Heart right ventricle (tissue), 16 donors: ENCODE measurements at regions of chr4 and their contacts with region 1.

Region 1: DNA sequence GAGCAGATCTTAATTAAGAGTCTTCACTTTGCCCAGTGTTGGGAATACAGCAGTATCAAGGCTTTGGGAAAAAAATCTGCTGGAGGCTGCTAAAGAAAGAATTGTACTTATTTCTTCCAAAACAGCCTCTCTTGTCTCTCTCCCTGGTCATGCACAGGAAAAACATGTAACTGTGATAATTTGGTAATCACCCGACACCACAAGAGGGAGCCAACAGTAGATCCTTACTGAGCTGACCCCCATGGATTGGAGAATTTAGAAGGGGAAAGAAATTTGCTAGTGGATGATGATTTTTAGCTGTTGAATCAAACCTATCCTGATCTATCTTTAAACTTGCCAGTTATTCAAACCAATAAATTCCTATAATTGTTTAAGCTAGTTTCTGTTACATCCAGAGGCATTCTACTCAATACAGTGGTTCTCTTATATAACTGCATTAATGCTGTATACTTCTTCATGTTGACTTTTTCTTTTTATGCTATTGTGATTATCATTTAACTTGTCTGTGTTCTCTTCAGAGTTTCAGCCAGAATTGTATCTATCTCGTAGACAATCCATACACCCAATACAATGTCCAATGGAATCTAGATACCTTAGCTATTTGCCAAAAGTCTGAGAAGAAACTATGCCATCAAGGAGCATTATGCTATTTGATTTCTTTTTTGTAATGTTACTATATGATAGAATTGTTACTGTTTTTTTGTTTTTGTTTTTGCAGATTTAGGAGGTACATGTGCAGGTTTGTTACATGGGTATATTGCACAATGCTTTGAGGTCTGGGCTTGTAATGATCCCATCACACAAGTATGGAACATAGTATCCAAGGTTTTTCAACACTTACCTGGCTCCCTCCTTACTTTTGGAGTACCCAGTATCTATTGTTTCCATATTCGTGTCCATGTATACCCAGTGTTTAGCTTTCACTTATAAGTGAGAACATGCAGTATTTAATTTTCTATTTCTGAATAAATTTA is 31.3 kb upstream of the ARHGEF38 start:
- DNase-seq: peak in 1 of 2 donors; percentile 27
- ATAC-seq: peak in 1 of 8 donors; percentile 60
- H3K4me3 ChIP-seq: no peak overlapping the region
- H3K27ac ChIP-seq: no peak overlapping the region
- H3K4me1 ChIP-seq: no peaks in the 10 kb centered on the region
- H3K27me3 ChIP-seq: no peaks in the 10 kb centered on the region
- CTCF ChIP-seq: peak; percentile 25 to 70 (median 65)

Region 2: GRCh38 chr4:105541420-105541819 is 20.3 kb after region 1 on chr4:
- intact Hi-C with region 1: no loop called
- DNase-seq: no peak
- ATAC-seq: no peak
- H3K4me3 ChIP-seq: no peak overlapping the region
- H3K27ac ChIP-seq: no peak overlapping the region
- H3K4me1 ChIP-seq: peaks cover 0 to 8% (median 0%) of the 10 kb centered on the region in 9 donors
- H3K27me3 ChIP-seq: no peaks in the 10 kb centered on the region
- CTCF ChIP-seq: no peak

Region 3: GRCh38 chr4:105637408-105638176 is 116.5 kb after region 1 on chr4:
- intact Hi-C with region 1: loop called in 1 of 10 experiments (anchors 10 kb)
- DNase-seq: peak; percentile 43 to 63
- ATAC-seq: peak in 6 of 8 donors; percentile 52 to 94 (median 82)
- H3K4me3 ChIP-seq: no peak overlapping the region
- H3K27ac ChIP-seq: peak overlapping the region in 7 of 10 donors; percentile 9 to 35 (median 17)
- H3K4me1 ChIP-seq: peaks cover 0 to 64% (median 26%) of the 10 kb centered on the region in 9 donors
- H3K27me3 ChIP-seq: no peaks in the 10 kb centered on the region
- CTCF ChIP-seq: no peak

Region 4: DNA sequence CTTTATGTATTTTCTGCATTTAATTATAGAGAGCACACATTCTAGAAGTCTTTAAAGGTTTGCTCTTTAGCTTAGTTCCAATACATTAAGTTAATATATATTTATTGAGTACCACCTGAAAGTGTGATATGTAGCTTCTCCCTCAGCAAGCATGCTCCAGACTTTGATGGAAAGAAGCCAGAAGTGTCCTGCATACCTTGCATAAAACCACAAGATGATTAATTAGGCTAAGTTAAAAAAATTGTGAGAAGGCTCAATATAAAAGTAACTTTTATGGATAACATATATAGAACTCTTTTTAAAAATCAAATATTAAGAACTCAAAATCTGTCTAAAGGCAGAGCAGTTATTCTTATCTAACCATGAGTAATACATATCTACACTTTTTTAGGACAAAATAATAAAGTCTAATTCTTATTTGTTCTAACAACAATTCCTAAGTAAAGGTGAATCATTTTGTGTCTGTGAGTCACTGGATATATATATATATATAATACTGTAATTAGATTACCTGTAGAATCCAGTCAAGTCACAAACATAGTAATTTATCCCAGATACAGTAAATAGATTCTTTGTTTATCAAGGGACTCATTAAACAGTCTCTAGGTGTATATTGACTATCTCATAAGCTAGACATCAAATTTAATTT is 136.1 kb after region 1 on chr4:
- intact Hi-C with region 1: loop called in 1 of 10 experiments (anchors 10 kb)
- DNase-seq: no peak
- ATAC-seq: no peak
- H3K4me3 ChIP-seq: no peak overlapping the region
- H3K27ac ChIP-seq: no peak overlapping the region
- H3K4me1 ChIP-seq: no peaks in the 10 kb centered on the region
- H3K27me3 ChIP-seq: no peaks in the 10 kb centered on the region
- CTCF ChIP-seq: no peak

Region 5: DNA sequence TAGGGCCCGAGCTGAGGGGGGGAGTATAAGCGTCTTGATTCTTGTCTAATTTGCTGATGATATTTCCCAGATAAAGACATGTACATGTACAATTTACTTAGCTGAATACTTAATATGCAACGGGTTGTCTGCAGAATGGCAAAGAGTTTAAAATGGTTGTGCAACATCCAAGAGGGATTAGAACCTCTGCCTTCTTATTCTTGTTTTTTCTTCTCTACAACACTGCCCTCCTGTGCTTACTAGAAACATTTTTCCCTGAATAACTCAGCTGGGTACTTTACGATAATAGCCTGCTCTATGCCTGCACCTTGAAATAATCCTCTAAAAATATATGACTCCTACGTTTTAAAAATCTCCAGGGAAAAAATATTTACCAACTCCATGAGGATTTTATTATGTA is 145.6 kb after region 1 on chr4:
- intact Hi-C with region 1: loop called in 8 of 10 experiments (anchors 1 to 5 kb)
- DNase-seq: no peak
- ATAC-seq: peak in 5 of 8 donors; percentile 38 to 73 (median 63)
- H3K4me3 ChIP-seq: no peak overlapping the region
- H3K27ac ChIP-seq: no peak overlapping the region
- H3K4me1 ChIP-seq: peaks cover 0 to 6% (median 0%) of the 10 kb centered on the region in 9 donors
- H3K27me3 ChIP-seq: peaks cover 0 to 3% (median 0%) of the 10 kb centered on the region in 7 donors
- CTCF ChIP-seq: peak in 7 of 9 donors; percentile 28 to 52 (median 47)